PC-3 (cell line): ENCODE measurements at regions of chr3 and their contacts with region 1.

Region 1: DNA sequence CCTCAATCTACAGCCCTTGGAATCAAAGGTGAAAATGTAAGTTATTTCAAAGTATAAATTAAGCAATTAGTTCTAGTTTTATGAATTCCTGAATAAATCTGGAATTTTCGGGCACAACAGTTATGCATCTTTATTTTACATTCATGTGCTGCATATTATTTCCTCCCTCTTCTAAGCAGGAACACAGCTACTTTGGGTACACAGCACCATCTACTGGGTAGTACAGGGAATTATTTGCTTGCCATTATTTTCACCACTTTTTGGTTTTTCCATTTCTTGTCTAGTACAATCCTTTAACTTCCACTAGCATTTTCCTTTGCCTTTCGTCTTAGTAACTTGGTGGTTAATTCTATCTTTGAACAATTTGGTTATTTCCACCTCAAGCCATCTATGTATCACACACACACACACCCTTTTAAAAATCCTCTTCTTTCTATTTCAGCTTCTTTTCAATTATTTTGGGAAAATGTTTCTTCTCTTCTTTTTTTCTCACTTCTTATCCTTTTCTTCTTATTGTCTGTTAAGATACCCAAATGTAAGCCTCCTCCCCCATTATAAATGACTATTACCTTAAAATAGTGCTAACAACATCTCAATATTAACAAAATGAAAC is 451.0 kb downstream of the MFSD1 start:
- DNase-seq: peak; percentile 79
- ATAC-seq: peak; percentile 28
- H3K4me3 ChIP-seq: 0 out of 2 replicates have a peak overlapping the region, but pooled peaks have one; percentile 12
- H3K27ac ChIP-seq: no peak overlapping the region
- H3K4me1 ChIP-seq: peaks cover 27% of the 10 kb centered on the region
- H3K27me3 ChIP-seq: no peaks in the 10 kb centered on the region
- CTCF ChIP-seq: peak; percentile 95

Region 2: GRCh38 chr3:158845765-158846350 is 407.0 kb before region 1 on chr3:
- CTCF ChIA-PET with region 1: no interaction called
- POLR2A ChIA-PET with region 1: no interaction called
- intact Hi-C with region 1: loop called (anchors 2 kb)
- DNase-seq: peak; percentile 62
- ATAC-seq: peak; percentile 50
- H3K4me3 ChIP-seq: no peak overlapping the region
- H3K27ac ChIP-seq: no peak overlapping the region
- H3K4me1 ChIP-seq: no peaks in the 10 kb centered on the region
- H3K27me3 ChIP-seq: no peaks in the 10 kb centered on the region
- CTCF ChIP-seq: peak; percentile 78

Region 3: GRCh38 chr3:158918008-158918407 is 334.9 kb before region 1 on chr3:
- CTCF ChIA-PET with region 1: no interaction called
- POLR2A ChIA-PET with region 1: no interaction called
- intact Hi-C with region 1: loop called (anchors 2 kb)
- DNase-seq: peak; percentile 68
- ATAC-seq: peak; percentile 87
- H3K4me3 ChIP-seq: no peak overlapping the region
- H3K27ac ChIP-seq: no peak overlapping the region
- H3K4me1 ChIP-seq: peaks cover 3% of the 10 kb centered on the region; the same call in 1 of the 2 replicates
- H3K27me3 ChIP-seq: no peaks in the 10 kb centered on the region
- CTCF ChIP-seq: peak; percentile 81

Region 4: GRCh38 chr3:159077860-159078259 is 175.0 kb before region 1 on chr3:
- CTCF ChIA-PET with region 1: no interaction called
- POLR2A ChIA-PET with region 1: no interaction called
- intact Hi-C with region 1: loop called (anchors 5 kb)
- DNase-seq: peak; percentile 94
- ATAC-seq: peak; percentile 75
- H3K4me3 ChIP-seq: no peak overlapping the region
- H3K27ac ChIP-seq: peak overlapping the region; percentile 44
- H3K4me1 ChIP-seq: peaks cover 55% of the 10 kb centered on the region
- H3K27me3 ChIP-seq: no peaks in the 10 kb centered on the region
- CTCF ChIP-seq: no peak

Region 5: GRCh38 chr3:159130108-159130507 is 122.8 kb before region 1 on chr3:
- CTCF ChIA-PET with region 1: interaction called, 3 read pairs
- POLR2A ChIA-PET with region 1: no interaction called
- intact Hi-C with region 1: loop called (anchors 2 kb)
- DNase-seq: peak; percentile 52
- ATAC-seq: no peak
- H3K4me3 ChIP-seq: no peak overlapping the region
- H3K27ac ChIP-seq: no peak overlapping the region
- H3K4me1 ChIP-seq: peaks cover 23% of the 10 kb centered on the region
- H3K27me3 ChIP-seq: no peaks in the 10 kb centered on the region
- CTCF ChIP-seq: peak; percentile 73

Region 6: DNA sequence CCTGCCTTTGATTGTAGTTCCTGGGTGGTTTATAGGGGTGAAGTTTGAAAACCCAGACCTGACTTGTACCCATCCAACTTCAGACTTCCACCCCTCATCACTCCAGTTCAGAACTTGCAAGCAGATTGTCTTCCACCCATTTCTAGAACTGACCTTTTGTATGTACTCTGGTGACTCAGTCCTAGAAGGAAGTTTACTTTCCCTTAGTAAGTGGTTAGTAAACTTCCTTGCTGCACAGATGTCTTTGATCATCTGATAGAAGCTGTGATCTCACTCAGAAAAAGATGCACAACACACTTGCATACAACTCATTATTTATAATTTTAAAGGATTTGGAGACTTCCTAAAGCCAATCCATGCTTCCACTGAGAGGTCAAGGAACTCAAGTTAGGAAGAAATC is 83.0 kb before region 1 on chr3:
- CTCF ChIA-PET with region 1: no interaction called
- POLR2A ChIA-PET with region 1: no interaction called
- intact Hi-C with region 1: loop called (anchors 2 kb)
- DNase-seq: peak; percentile 89
- ATAC-seq: peak; percentile 95
- H3K4me3 ChIP-seq: peak overlapping the region; percentile 3; the same call in 1 of the 2 replicates
- H3K27ac ChIP-seq: peak overlapping the region; percentile 76
- H3K4me1 ChIP-seq: peaks cover 59% of the 10 kb centered on the region
- H3K27me3 ChIP-seq: no peaks in the 10 kb centered on the region
- CTCF ChIP-seq: no peak

Region 7: GRCh38 chr3:159200176-159200575 is 52.7 kb before region 1 on chr3:
- CTCF ChIA-PET with region 1: no interaction called
- POLR2A ChIA-PET with region 1: no interaction called
- intact Hi-C with region 1: no loop called
- DNase-seq: peak; percentile 60
- ATAC-seq: peak; percentile 38
- H3K4me3 ChIP-seq: no peak overlapping the region
- H3K27ac ChIP-seq: no peak overlapping the region
- H3K4me1 ChIP-seq: 0 out of 2 replicates have a peak, but pooled peaks cover 7% of the 10 kb centered on the region
- H3K27me3 ChIP-seq: no peaks in the 10 kb centered on the region
- CTCF ChIP-seq: no peak